ENCODE measurements at regions of chr5 and their contacts with region 1.

Region 1: GRCh38 chr5:119267958-119268386 is 87.8 kb upstream of the TNFAIP8 start:
- DNase-seq: peak; percentile 86
- H3K4me3 Mint-ChIP-seq: peak overlapping the region; percentile 96
- H3K27ac Mint-ChIP-seq: peak overlapping the region; percentile 89
- H3K4me1 Mint-ChIP-seq: peaks cover 50% of the 10 kb centered on the region
- H3K27me3 Mint-ChIP-seq: peaks cover 2% of the 10 kb centered on the region

Region 2: GRCh38 chr5:118987988-118988865 is 279.7 kb before region 1 on chr5 and contains the start of gene DTWD2:
- CTCF ChIA-PET with region 1: interaction called, 20 read pairs
- POLR2A ChIA-PET with region 1: no interaction called
- DNase-seq: peak; percentile 91
- H3K4me3 Mint-ChIP-seq: peak within 1 kb of the TSS; percentile 70
- H3K27ac Mint-ChIP-seq: peak within 1 kb of the TSS; percentile 21
- H3K4me1 Mint-ChIP-seq: peaks cover 13% of the 10 kb centered on the region
- H3K27me3 Mint-ChIP-seq: no peaks in the 10 kb centered on the region
- total RNA-seq, gene DTWD2: 1.3 to 1.6 TPM

Region 3: DNA sequence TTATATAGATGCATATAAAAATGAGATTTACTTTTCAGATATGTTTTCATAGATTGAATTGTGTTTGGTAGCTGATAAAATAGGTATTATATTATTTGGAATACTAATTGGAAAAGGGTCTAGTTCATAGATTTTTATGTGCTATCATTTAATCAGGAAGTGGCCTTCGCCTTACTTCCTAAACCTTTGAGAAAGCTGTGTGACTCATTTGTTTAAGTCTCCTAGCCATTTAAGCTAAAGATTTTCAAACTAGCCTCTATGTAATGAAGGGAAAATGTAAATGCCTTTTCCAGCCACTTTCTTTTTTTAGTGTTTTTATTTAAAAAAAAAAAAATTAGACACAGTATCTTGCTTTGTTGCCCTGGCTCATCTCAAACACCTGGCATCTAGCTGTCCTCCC is 99.6 kb before region 1 on chr5:
- CTCF ChIA-PET with region 1: no interaction called
- POLR2A ChIA-PET with region 1: no interaction called
- DNase-seq: no peak
- H3K4me3 Mint-ChIP-seq: no peak overlapping the region
- H3K27ac Mint-ChIP-seq: no peak overlapping the region
- H3K4me1 Mint-ChIP-seq: peaks cover 5% of the 10 kb centered on the region
- H3K27me3 Mint-ChIP-seq: no peaks in the 10 kb centered on the region

Region 4: DNA sequence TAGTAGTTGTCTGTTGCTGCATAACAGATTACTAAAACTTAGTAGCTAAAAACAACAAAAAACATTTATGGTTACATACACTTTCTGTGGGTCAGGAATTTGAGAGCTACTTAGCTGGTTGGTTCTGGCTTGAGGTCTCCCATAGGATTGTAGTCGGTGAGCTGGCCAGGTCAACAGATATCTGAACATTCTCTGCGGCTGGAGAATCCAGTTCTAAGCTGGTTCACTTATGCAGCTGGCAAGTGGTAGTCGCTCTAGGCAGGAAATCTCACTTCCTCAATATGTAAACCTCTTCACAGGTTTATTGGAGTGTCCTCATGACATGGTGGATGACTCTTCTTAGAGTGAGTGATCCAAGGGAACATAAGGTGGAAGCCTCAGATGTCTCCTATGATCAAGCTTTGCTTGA is 22.2 kb after region 1 on chr5:
- CTCF ChIA-PET with region 1: interaction called, 9 read pairs
- POLR2A ChIA-PET with region 1: interaction called, 128 read pairs
- DNase-seq: no peak
- H3K4me3 Mint-ChIP-seq: peak overlapping the region; percentile 56
- H3K27ac Mint-ChIP-seq: peak overlapping the region; percentile 80
- H3K4me1 Mint-ChIP-seq: peaks cover 85% of the 10 kb centered on the region
- H3K27me3 Mint-ChIP-seq: no peaks in the 10 kb centered on the region

Region 5: DNA sequence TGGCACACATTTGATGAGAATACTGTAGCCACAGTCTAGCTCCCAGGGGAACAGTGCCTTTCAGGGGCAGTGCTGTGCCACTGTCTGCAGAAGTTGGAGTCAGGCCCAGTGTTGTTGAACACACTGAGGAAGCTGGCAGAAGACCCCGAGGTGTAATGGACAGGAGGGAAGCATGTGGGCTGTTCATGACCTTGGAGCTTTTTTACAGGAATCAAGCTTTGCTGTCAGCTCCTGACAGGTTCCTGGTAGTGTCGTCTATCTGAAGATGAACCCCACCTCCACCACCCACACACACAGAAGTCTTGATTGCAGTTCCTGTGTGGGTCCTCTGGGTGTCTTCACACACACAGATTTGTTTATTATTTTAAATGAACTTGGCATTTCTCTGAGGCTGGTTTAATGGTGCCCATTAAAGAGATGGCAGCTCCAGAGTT is 47.6 kb after region 1 on chr5:
- CTCF ChIA-PET with region 1: interaction called, 9 read pairs
- POLR2A ChIA-PET with region 1: interaction called, 270 read pairs
- DNase-seq: peak; percentile 63
- H3K4me3 Mint-ChIP-seq: peak overlapping the region; percentile 21
- H3K27ac Mint-ChIP-seq: peak overlapping the region; percentile 77
- H3K4me1 Mint-ChIP-seq: peaks cover 94% of the 10 kb centered on the region
- H3K27me3 Mint-ChIP-seq: no peaks in the 10 kb centered on the region

Region 6: DNA sequence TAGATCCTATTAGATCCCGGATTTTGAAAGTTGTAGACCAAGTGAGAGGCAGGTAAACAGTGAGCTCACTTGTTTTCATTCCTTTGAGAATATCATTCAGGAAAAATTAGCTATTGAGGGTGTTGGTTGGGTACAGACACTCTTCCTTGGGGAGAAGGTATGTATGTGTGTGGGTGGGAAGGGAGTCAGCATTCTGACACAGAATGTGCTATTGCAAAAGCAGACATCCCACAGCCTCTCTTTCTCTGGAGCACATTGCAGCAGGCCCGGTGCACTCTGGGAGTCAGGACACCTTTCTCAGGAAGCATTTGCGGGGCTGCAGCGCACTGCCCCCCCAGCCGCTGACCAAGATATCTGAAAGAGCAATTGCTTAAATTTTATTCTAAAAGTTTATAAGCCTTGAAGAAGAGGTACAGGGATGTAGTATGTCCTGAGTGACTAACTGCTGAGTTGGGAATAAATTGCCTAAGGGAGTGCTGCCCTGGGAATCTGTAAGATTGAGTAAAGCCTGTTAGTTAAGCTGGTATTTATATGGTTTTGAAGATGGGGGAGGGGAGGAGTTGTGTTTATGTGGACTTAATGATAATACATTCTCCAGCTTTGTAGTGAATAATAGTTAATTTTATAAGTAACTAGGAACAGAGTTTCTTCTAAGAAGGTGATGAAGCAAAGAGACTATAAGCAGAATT is 93.1 kb after region 1 on chr5:
- CTCF ChIA-PET with region 1: interaction called, 5 read pairs
- POLR2A ChIA-PET with region 1: interaction called, 76 read pairs
- DNase-seq: no peak
- H3K4me3 Mint-ChIP-seq: no peak overlapping the region
- H3K27ac Mint-ChIP-seq: peak overlapping the region; percentile 88
- H3K4me1 Mint-ChIP-seq: peaks cover 95% of the 10 kb centered on the region
- H3K27me3 Mint-ChIP-seq: no peaks in the 10 kb centered on the region